CD4-positive, alpha-beta T cell (primary cell): ENCODE measurements at regions of chr3 and their contacts with region 1.

Region 1: GRCh38 chr3:43190666-43191065 is 84.8 kb upstream of the POMGNT2 start:
- DNase-seq: no peak
- ATAC-seq: no peak
- H3K4me3 ChIP-seq: no peak overlapping the region
- H3K4me3 Mint-ChIP-seq: no peak overlapping the region
- H3K27ac ChIP-seq: no peak overlapping the region
- H3K27ac Mint-ChIP-seq: no peak overlapping the region
- H3K4me1 ChIP-seq: peaks cover 47% of the 10 kb centered on the region
- H3K4me1 Mint-ChIP-seq: peaks cover 62% of the 10 kb centered on the region
- H3K27me3 ChIP-seq: no peaks in the 10 kb centered on the region
- H3K27me3 Mint-ChIP-seq: no peaks in the 10 kb centered on the region
- CTCF ChIP-seq: no peak

Region 2: GRCh38 chr3:43207628-43208085 is 17.0 kb after region 1 on chr3:
- CTCF ChIA-PET with region 1: no interaction called
- POLR2A ChIA-PET with region 1: no interaction called
- intact Hi-C with region 1: loop called in 1 of 2 experiments (anchors 2 kb)
- DNase-seq: no peak
- ATAC-seq: no peak
- H3K4me3 ChIP-seq: no peak overlapping the region
- H3K4me3 Mint-ChIP-seq: no peak overlapping the region
- H3K27ac ChIP-seq: no peak overlapping the region
- H3K27ac Mint-ChIP-seq: no peak overlapping the region
- H3K4me1 ChIP-seq: no peaks in the 10 kb centered on the region
- H3K4me1 Mint-ChIP-seq: no peaks in the 10 kb centered on the region
- H3K27me3 ChIP-seq: no peaks in the 10 kb centered on the region
- H3K27me3 Mint-ChIP-seq: no peaks in the 10 kb centered on the region
- CTCF ChIP-seq: no peak